ENCODE measurements at regions of chr2 and their contacts with region 1.

Region 1: GRCh38 chr2:118003396-118003824 is 10.5 kb downstream of the CCDC93 start:
- DNase-seq: peak in 1 of 3 donors; percentile 84
- ATAC-seq: peak; percentile 98
- H3K4me3 ChIP-seq: no peak overlapping the region
- H3K4me1 ChIP-seq: no peaks in the 10 kb centered on the region
- CTCF ChIP-seq: peak; percentile 71

Region 2: GRCh38 chr2:117785740-117786139 is 217.7 kb before region 1 on chr2:
- intact Hi-C with region 1: no loop called
- DNase-seq: peak in 1 of 3 donors; percentile 65
- ATAC-seq: no peak
- H3K4me3 ChIP-seq: no peak overlapping the region
- H3K4me1 ChIP-seq: no peaks in the 10 kb centered on the region
- CTCF ChIP-seq: peak; percentile 34

Region 3: DNA sequence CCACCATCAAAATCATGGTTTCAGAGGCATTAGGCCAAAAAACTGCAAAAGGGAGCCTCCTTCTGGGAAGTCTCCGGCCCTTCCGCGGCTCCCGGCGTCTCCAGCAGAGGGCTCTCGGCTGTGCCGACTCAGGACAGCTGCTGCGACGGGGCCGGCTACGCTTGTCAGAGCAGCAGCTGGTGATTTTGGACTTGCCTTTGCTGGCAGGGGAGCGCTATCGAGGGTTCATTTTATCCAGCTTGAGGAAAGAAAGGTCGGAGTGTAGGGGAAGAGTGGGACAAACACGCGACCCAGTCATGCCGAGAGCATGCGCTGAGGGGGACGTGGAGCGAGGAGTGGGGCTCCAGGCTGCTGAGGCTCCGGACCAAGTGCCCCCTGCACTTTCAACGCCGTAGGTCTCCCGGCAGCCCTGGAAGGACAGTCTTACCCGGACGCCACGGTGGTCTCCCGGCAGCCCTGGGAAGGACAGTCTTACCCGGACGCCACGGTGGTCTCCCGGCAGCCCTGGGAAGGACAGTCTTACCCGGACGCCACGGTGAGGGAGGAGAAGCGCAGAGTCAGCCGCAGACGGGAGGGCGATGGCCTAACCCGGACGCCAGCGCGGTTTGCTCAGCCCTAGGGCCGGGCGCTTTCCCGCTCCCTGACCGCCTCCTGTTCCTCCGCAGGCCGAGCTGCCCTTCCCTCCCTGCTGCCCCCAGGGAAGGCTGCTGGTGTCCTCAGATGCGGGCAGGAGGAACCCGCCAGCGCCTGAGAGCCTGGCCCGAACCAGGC is 167.2 kb before region 1 on chr2:
- intact Hi-C with region 1: loop called in 1 of 2 experiments (anchors 10 kb)
- DNase-seq: peak; percentile 73 to 84 (median 83)
- ATAC-seq: peak; percentile 93
- H3K4me3 ChIP-seq: no peak overlapping the region
- H3K4me1 ChIP-seq: peaks cover 9% of the 10 kb centered on the region
- CTCF ChIP-seq: peak; percentile 63